ENCODE measurements at regions of chr3 and their contacts with region 1.

Region 1: GRCh38 chr3:9362731-9363530 is at the start of gene THUMPD3:
- DNase-seq: peak; percentile 74 to 95
- H3K4me3 ChIP-seq: peak within 1 kb of the TSS; percentile 66 to 75
- H3K27ac ChIP-seq: peak within 1 kb of the TSS; percentile 80 to 94
- H3K4me1 ChIP-seq: peaks cover 0 to 17% of the 10 kb centered on the region in 2 donors
- H3K27me3 ChIP-seq: no peaks in the 10 kb centered on the region
- CTCF ChIP-seq: no peak
- total RNA-seq, gene THUMPD3: 24.4 TPM

Region 2: GRCh38 chr3:9340472-9340902 is 22.4 kb before region 1 on chr3:
- intact Hi-C with region 1: no loop called
- DNase-seq: no peak
- H3K4me3 ChIP-seq: no peak overlapping the region
- H3K27ac ChIP-seq: no peak overlapping the region
- H3K4me1 ChIP-seq: no peaks in the 10 kb centered on the region
- H3K27me3 ChIP-seq: no peaks in the 10 kb centered on the region
- CTCF ChIP-seq: no peak

Region 3: DNA sequence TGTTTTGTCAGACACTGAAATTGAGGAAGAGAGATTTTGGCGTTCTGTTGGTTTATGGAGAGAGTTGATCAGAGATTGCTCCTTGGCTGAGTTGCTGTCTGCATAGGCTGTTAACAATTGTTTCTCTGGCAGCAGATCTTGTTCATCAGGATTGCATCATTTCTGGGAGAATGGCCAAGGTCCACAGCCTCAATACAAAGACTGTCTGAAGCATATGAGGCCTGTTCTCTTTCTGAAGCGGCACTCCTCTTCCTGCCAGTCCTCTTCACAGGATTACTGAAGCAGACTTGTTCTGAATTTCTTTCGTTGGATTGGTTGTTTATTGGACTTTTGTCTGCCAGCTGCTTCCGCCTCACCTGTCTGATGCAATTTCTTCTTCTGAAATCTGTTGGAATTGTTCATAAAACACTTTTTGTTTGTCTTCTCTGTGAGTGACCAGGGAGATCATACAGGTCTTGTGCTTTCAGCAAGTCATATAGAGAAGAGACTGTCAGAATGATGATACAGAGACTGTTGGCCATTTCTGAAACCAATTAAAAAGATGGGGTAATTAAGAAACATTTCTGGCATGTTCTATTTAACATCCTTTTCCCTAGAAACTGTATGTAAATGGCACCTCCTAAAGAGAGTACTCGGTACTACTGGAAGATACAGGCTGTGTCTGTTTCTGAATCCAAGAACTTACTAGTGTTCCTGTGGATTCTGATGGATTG is 59.9 kb after region 1 on chr3:
- intact Hi-C with region 1: loop called (anchors 5 kb)
- DNase-seq: peak; percentile 14 to 93
- H3K4me3 ChIP-seq: peak overlapping the region; percentile 26 to 42
- H3K27ac ChIP-seq: peak overlapping the region; percentile 71 to 82
- H3K4me1 ChIP-seq: peaks cover 5 to 35% of the 10 kb centered on the region in 2 donors
- H3K27me3 ChIP-seq: no peaks in the 10 kb centered on the region
- CTCF ChIP-seq: peak in 2 of 3 experiments; percentile 41 to 66